ENCODE measurements at regions of chr6 and their contacts with region 1.

Region 1: DNA sequence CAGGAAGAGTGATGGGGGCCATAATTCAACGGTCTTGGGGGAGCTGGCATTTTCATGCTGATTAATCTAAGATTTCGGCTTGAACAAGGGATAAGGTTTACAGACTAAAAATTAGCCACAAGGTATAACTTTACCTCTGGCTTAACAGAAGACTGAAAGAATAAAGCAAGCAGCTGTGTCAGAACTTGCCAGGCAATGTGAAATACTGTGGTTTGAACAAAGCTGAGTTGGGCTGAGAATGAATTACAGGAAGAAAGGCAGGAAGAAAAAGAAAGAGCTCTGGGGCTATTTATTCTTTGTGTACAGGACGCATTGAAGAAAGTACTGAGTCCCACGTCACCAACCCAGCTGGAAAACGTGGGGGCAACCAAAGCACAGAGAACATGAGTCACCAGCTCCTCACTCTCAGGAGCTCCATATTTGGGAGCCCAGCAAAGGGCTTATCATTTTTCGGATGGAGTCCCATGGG is 121.5 kb upstream of the NEDD9 start:
- DNase-seq: peak; percentile 89
- H3K4me3 Mint-ChIP-seq: peak overlapping the region; percentile 43
- H3K27ac Mint-ChIP-seq: peak overlapping the region; percentile 93
- H3K4me1 Mint-ChIP-seq: peaks cover 79% of the 10 kb centered on the region
- H3K27me3 Mint-ChIP-seq: no peaks in the 10 kb centered on the region

Region 2: DNA sequence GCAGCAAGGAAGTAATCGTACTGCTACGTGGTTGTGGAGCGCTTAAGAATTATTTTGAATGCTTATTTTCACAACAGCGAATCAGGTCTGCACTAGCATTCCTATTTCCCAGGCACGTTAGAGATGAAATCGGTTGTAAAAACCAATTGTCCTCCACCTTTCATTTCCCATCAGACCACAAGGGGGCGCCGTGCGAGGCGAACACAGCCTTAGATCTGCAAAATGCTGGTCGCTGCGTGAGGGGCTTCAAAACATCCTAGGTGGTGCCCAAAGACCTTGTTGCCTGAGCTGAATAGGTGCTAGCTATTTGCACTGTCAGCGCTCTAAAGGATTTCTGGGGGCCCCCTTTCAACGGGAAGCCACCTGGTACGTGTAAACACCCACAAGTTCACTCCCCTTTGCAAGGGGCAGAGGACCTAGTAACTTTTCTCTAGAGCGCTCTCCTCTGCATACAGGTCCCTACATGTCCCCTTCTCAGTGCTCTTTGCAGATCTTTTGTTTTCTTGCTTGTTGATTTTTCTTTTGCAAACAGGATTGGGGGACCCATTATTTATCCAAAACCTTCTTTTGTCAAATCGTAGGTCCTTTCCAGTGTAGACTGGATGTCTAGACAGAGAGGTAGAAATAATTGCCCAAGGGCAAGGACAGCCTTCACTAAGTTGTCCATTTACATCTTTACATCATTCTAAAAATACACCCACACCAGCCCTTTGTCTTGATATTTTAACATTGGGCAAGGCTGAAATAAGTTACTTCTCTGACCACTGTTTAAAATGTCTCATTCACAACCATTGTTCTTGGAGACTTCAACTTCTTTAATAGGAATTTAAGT is 181.2 kb before region 1 on chr6:
- CTCF ChIA-PET with region 1: no interaction called
- POLR2A ChIA-PET with region 1: no interaction called
- intact Hi-C with region 1: loop called (anchors 5 kb)
- DNase-seq: peak; percentile 81
- H3K4me3 Mint-ChIP-seq: peak overlapping the region; percentile 16
- H3K27ac Mint-ChIP-seq: no peak overlapping the region
- H3K4me1 Mint-ChIP-seq: peaks cover 16% of the 10 kb centered on the region
- H3K27me3 Mint-ChIP-seq: no peaks in the 10 kb centered on the region

Region 3: GRCh38 chr6:11317885-11318771 is 35.8 kb before region 1 on chr6:
- CTCF ChIA-PET with region 1: interaction called, 3 read pairs
- POLR2A ChIA-PET with region 1: interaction called, 3 read pairs
- intact Hi-C with region 1: loop called (anchors 1 kb)
- DNase-seq: peak; percentile 88
- H3K4me3 Mint-ChIP-seq: peak overlapping the region; percentile 14
- H3K27ac Mint-ChIP-seq: peak overlapping the region; percentile 92
- H3K4me1 Mint-ChIP-seq: peaks cover 63% of the 10 kb centered on the region
- H3K27me3 Mint-ChIP-seq: no peaks in the 10 kb centered on the region

Region 4: DNA sequence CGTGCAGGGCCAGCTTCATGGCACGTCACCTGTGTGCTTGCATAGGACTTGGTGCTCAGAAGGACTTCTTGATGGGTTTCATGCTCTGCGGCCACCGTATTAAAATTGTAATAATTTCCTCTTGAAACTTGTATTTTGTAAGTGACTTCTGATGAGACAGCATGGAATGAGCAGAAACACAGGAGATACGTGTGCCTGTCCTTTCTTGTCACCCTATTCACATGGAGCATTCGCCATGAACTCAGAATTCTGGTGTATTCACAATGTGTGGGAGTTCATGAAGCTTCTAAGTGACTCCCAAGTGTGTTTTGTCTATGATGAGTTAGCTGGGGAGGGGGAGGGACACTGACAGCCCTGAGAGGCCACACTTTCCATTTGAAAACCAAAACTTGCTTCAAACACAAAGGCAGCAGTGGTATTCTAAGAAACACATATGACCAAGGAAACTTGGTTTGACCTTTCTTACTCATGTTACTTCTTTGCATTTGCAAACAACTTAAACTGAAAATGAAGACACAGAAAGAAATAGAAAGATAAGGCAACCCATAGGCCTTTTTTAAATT is 29.4 kb before region 1 on chr6:
- CTCF ChIA-PET with region 1: interaction called, 5 read pairs
- POLR2A ChIA-PET with region 1: interaction called, 7 read pairs
- intact Hi-C with region 1: loop called (anchors 1 kb)
- DNase-seq: peak; percentile 83
- H3K4me3 Mint-ChIP-seq: peak overlapping the region; percentile 57
- H3K27ac Mint-ChIP-seq: peak overlapping the region; percentile 85
- H3K4me1 Mint-ChIP-seq: peaks cover 73% of the 10 kb centered on the region
- H3K27me3 Mint-ChIP-seq: no peaks in the 10 kb centered on the region

Region 5: DNA sequence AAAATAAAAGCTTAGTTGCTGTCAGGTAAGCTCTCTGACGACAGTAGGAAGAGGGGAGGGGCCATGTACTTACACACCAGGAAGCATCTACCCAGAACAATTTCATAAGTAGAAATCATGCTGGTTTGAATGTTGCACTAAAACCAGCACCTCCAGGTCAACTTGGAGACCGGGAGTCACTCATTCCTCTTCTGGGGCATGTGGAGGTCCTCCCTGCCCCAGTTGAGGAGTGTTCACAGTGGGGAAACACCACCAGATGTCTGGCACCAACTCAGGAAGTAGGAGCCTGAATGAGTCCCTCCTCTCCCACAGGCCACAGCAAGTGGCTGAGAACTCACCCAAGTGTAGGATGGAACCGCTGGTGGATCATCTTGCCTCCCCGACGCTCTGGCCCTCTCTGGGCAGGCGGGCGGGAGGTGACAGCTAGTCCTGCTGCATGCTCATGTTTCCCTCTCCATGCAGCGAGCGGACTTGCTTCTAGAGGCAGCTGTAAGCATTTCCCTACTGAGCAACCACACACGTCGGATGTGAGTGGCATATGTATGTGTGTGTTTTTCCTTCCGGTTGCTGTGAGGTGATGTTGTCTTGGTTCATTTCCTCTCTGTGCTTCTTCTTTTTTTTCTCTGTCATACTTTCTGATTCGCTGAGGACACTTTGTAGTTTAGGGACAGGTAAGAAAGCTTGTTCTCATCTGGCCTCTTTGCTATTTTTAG is 28.0 kb after region 1 on chr6:
- CTCF ChIA-PET with region 1: interaction called, 5 read pairs
- POLR2A ChIA-PET with region 1: interaction called, 20 read pairs
- intact Hi-C with region 1: no loop called
- DNase-seq: peak; percentile 82
- H3K4me3 Mint-ChIP-seq: peak overlapping the region; percentile 85
- H3K27ac Mint-ChIP-seq: peak overlapping the region; percentile 95
- H3K4me1 Mint-ChIP-seq: peaks cover 58% of the 10 kb centered on the region
- H3K27me3 Mint-ChIP-seq: no peaks in the 10 kb centered on the region

Region 6: GRCh38 chr6:11575408-11576033 is 221.6 kb after region 1 on chr6:
- CTCF ChIA-PET with region 1: no interaction called
- POLR2A ChIA-PET with region 1: no interaction called
- intact Hi-C with region 1: no loop called
- DNase-seq: peak; percentile 63
- H3K4me3 Mint-ChIP-seq: no peak overlapping the region
- H3K27ac Mint-ChIP-seq: no peak overlapping the region
- H3K4me1 Mint-ChIP-seq: no peaks in the 10 kb centered on the region
- H3K27me3 Mint-ChIP-seq: no peaks in the 10 kb centered on the region